PC-9 (cell line): ENCODE measurements at regions of chr2 and their contacts with region 1.

Region 1: DNA sequence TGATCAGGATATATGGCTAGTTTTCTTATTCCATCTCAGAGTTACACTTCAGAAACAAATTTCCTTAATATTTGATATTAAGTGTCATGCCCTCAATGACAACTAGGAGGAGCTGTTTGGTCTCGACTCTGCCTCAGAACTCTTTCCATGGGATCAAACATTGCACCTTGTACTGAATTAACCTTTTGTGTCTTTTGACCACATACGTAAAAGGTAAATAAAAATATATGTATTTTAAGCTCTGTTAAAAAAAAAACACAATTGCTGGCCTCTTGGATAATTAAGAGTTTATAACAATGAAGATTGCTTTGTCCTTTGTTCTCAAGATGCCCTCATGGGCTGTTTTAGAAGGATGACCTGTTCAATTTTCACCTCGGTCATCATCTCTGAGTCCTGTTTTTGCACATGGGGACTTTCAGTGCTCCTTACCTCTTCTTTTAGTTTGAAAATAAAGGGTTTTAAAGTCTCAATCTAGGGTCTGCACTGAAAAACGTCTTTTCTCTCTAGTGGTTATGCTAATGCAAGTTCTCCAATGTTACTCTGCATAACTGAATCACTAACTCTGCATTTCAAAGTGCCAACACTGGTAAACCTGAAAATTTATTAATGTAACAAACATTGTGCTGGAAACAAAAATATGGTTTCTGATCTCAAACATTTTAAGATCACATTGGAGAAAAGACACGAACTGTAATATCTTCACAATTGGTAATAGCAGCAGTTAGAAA is 18.8 kb upstream of the FN1 start:
- DNase-seq: no peak
- H3K4me3 ChIP-seq: no peak overlapping the region
- H3K27ac ChIP-seq: no peak overlapping the region
- H3K4me1 ChIP-seq: no peaks in the 10 kb centered on the region
- H3K27me3 ChIP-seq: no peaks in the 10 kb centered on the region
- CTCF ChIP-seq: peak; percentile 96

Region 2: GRCh38 chr2:215149894-215150293 is 304.8 kb before region 1 on chr2:
- CTCF ChIA-PET with region 1: no interaction called
- POLR2A ChIA-PET with region 1: no interaction called
- intact Hi-C with region 1: no loop called
- DNase-seq: no peak
- H3K4me3 ChIP-seq: no peak overlapping the region
- H3K27ac ChIP-seq: no peak overlapping the region
- H3K4me1 ChIP-seq: no peaks in the 10 kb centered on the region
- H3K27me3 ChIP-seq: no peaks in the 10 kb centered on the region
- CTCF ChIP-seq: no peak

Region 3: GRCh38 chr2:215476424-215476823 is 21.7 kb after region 1 on chr2:
- CTCF ChIA-PET with region 1: no interaction called
- POLR2A ChIA-PET with region 1: no interaction called
- intact Hi-C with region 1: no loop called
- DNase-seq: no peak
- H3K4me3 ChIP-seq: no peak overlapping the region
- H3K27ac ChIP-seq: no peak overlapping the region
- H3K4me1 ChIP-seq: no peaks in the 10 kb centered on the region
- H3K27me3 ChIP-seq: no peaks in the 10 kb centered on the region
- CTCF ChIP-seq: no peak

Region 4: GRCh38 chr2:215635788-215636139 is 181.1 kb after region 1 on chr2:
- CTCF ChIA-PET with region 1: no interaction called
- POLR2A ChIA-PET with region 1: no interaction called
- intact Hi-C with region 1: loop called (anchors 5 kb)
- DNase-seq: peak; percentile 15 to 60
- H3K4me3 ChIP-seq: no peak overlapping the region
- H3K27ac ChIP-seq: no peak overlapping the region
- H3K4me1 ChIP-seq: peaks cover 8% of the 10 kb centered on the region; the same call in 1 of the 2 replicates
- H3K27me3 ChIP-seq: no peaks in the 10 kb centered on the region
- CTCF ChIP-seq: no peak; the same call in 1 of the 2 replicates

Region 5: GRCh38 chr2:215828517-215829184 is 374.0 kb after region 1 on chr2:
- CTCF ChIA-PET with region 1: interaction called, 4 read pairs
- POLR2A ChIA-PET with region 1: no interaction called
- intact Hi-C with region 1: loop called (anchors 5 kb)
- DNase-seq: peak; percentile 60 to 65
- H3K4me3 ChIP-seq: no peak overlapping the region
- H3K27ac ChIP-seq: no peak overlapping the region
- H3K4me1 ChIP-seq: peaks cover 50% of the 10 kb centered on the region
- H3K27me3 ChIP-seq: no peaks in the 10 kb centered on the region
- CTCF ChIP-seq: peak; percentile 85